Posterior vena cava (tissue), 2 donors: ENCODE measurements at regions of chr3 and their contacts with region 1.

Region 1: DNA sequence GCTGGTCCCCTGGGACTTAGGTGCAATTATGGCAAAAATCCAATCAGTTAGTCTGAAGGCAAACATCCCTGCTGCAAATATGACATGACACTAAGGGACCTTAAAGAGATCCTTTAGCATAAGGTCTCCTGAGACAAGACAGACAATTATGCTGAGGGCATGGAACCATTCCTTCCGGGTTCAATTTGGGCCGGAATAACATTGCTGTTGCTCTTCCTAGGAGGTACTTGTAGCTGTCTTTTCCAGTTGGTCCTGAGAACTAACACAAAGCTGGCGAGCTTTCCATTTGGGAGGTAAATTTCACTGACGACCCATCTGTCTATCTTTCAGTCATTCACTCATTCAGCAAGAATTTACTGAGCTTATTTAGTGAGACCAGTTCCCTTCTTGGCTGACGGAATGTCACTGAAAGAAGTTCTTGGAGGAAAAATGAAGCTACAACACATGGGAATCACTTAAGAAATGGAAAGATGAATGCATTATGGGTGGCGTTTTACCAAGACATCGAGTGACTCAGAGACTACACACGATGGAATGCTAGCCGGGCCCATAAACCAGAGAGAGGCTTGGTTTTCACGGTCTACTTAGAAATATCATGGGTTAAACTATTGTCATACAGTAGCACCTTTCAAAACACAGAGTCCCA is 215.5 kb downstream of the PDZRN3 start:
- DNase-seq: no peak

Region 2: GRCh38 chr3:73319179-73319769 is 90.0 kb before region 1 on chr3:
- intact Hi-C with region 1: no loop called
- DNase-seq: no peak

Region 3: DNA sequence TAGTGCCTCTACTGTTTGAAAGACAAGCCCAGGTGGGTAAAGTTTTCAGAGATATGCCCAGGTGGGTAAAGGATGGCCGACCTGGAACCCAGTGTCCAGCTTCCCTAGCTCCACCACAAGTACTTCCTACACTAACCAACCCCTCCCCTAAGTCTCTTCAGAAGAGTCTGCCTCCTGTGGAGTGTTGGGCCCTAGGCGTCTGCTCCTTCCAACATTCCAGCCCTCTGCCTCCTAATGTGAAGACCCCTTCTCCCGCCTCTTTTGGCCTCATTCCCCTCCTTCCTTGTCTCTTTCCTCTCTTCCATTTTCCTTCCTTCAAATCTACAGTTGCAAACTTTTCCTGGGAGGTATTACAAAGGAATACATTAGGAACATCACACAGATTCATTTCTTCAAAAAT is 1166.6 kb after region 1 on chr3:
- intact Hi-C with region 1: loop called in 1 of 2 experiments (anchors 5 kb)
- DNase-seq: no peak